ENCODE measurements at regions of chr16 and their contacts with region 1.

Region 1: DNA sequence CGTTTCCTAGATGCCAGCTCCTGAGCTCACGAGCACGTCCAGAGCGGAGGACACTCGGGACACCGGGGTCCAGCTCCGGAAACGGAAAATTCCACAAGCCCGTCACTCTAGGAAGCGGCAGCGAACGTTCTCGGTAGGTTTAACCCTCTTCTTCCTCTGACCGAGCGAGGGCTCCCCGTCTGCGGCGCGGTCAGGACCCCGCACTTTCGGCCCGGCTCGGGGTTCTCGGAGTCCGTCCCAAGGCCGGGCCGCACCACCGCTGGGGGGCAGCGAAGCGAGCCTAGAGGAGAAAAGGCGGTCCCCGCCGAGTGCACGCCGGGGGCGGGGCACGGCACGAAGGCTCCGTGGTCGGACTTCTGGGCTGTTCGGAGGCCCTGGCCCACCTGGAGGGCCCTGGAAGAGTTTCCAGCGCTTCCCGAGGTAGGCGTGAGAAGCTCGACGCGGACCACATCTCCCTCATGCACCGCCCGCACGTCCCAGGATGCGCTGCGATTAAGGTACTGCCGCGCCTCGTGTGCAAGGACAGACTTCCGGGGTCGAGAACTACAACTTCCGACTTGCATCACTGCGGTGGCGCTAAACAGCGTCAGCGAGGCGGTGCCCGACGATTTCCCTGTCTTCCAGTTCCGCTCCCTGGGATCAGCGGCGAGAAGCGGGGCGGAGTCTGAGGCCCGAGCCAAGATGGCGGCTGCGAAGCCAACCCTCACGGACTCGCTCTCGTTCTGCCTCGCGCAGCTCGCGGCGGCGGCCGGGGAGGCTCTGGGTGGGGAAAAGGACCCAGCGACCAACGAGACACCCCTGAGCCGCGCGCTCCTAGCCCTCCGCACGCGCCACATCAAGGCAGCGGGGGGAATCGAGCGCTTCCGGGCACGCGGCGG is at the start of gene ARMC5:
- DNase-seq: peak; percentile 95 to 99 (median 98)
- H3K4me3 ChIP-seq: peak within 1 kb of the TSS; percentile 66 to 100 (median 88)
- H3K27ac ChIP-seq: peak within 1 kb of the TSS; percentile 96 to 100 (median 100)
- H3K27me3 ChIP-seq: no peaks in the 10 kb centered on the region
- CTCF ChIP-seq: peak in 55 of 56 donors; percentile 32 to 84 (median 66)
- total RNA-seq, gene ARMC5: 10.4 to 21.8 (median 15.2) TPM

Region 2: GRCh38 chr16:30957456-30958174 is 501.5 kb before region 1 on chr16 and contains the start of gene SETD1A:
- intact Hi-C with region 1: loop called (anchors 5 to 10 kb)
- DNase-seq: peak; percentile 93 to 99 (median 96)
- H3K4me3 ChIP-seq: peak within 1 kb of the TSS; percentile 58 to 96 (median 84)
- H3K27ac ChIP-seq: peak within 1 kb of the TSS; percentile 77 to 99 (median 98)
- H3K27me3 ChIP-seq: no peaks in the 10 kb centered on the region
- CTCF ChIP-seq: peak in 18 of 56 donors; percentile 1 to 49 (median 12)
- total RNA-seq, gene SETD1A: 13.3 to 28.5 (median 17.9) TPM

Region 3: DNA sequence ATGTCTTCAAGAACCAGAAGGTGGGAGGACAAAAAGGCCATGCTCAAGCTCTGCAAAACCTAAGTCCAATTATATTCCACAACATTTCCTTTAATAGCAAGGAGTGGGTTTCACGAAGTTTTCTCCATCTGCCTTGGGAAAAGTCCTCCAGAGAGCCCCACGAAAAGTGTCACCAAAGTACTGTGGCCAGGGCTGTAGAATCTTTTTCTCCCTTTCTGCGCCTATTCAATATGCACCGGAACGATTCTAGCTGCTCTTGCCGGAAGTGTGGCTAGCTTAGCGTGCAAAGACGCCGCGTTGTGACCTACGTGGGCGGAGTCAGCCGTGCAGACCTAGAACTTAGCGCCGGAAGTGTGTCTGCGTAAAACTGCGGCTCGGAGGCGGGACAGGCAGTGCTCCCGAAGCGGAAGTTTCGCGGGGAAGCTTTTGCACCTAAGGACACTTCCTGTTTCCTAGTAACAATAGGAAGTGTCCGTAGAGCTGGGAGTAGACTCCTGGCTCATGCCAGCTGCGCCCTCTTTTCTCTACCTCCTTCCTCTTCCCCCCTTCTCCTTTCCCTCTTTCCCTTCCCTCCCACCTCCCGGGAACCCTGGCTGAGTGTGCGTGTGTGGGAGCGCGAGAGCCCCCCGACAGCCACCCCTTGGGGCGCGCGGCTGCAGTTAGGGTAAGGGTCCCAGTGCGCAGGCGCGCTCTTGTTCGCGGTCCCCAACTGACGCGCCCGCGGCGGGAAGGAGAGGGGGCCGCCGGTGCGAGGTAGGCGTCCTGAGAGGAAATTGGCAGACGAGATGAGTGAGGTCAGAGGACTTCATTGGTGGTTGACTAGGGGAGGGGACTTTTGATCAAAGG is 384.9 kb before region 1 on chr16 and contains the starts of genes ZNF646 and ZNF668:
- intact Hi-C with region 1: loop called in 1 of 2 experiments (anchors 10 kb)
- DNase-seq: peak; percentile 98 to 100 (median 99)
- H3K4me3 ChIP-seq: peak within 1 kb of the TSS; percentile 74 to 99 (median 95)
- H3K27ac ChIP-seq: peak within 1 kb of the TSS; percentile 78 to 98 (median 95)
- H3K27me3 ChIP-seq: no peaks in the 10 kb centered on the region
- CTCF ChIP-seq: peak in 27 of 56 donors; percentile 5 to 44 (median 20)
- total RNA-seq, gene ZNF646: 11.2 to 24.3 (median 16.7) TPM
- total RNA-seq, gene ZNF668: 7.9 to 24.5 (median 12.5) TPM

Region 4: GRCh38 chr16:31179747-31180459 is 279.2 kb before region 1 on chr16 and contains the start of gene FUS:
- intact Hi-C with region 1: loop called in 1 of 2 experiments (anchors 10 kb)
- DNase-seq: peak; percentile 86 to 92 (median 92)
- H3K4me3 ChIP-seq: peak within 1 kb of the TSS; percentile 67 to 100 (median 89)
- H3K27ac ChIP-seq: peak within 1 kb of the TSS; percentile 78 to 100 (median 98)
- H3K27me3 ChIP-seq: no peaks in the 10 kb centered on the region
- CTCF ChIP-seq: peak in 10 of 56 donors; percentile 8 to 25 (median 15)
- total RNA-seq, gene FUS: 158 to 315 (median 238) TPM

Region 5: DNA sequence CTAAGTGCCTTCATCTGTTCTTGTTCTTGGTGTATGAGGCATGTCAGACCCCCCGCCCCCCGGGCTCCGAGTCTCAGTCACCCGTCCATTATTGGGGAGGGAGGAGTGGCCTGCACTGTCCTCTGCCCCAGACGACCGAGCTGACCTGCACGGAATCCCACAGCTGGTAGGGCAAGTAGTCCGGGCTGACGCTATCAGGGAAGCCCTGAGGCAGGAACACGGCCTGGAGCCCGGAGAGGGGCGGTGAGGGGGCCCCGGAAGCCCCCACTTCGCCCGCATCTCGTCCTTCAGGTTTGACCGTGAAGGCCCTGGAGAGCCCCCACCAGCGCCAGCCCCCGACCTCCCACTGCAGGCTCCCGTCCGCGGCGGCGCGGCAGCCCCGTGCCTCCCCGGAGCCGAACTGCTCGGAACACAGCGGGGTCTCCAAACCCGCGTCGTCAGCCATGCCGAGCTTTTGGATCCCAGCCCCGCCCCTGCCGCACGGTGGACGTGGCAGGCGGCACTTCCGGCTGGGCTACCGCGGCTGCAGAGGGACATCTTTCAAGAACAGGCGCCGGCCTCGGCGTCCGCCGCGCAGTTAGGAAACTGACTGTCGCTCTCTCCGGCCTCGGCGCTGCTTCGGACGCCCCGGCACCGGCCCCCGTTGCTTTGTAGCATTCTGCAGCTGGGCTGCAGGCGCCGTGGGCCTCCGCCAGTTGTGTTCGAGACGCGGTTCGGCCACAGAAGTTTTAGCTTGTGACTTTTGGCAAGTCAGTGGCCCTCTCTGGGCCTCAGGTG is 49.0 kb after region 1 on chr16 and contains the start of gene RUSF1:
- intact Hi-C with region 1: loop called (anchors 1 to 5 kb)
- DNase-seq: peak; percentile 88 to 94 (median 92)
- H3K4me3 ChIP-seq: peak within 1 kb of the TSS; percentile 52 to 100 (median 97)
- H3K27ac ChIP-seq: peak within 1 kb of the TSS; percentile 56 to 98 (median 93)
- H3K27me3 ChIP-seq: no peaks in the 10 kb centered on the region
- CTCF ChIP-seq: peak in 36 of 56 donors; percentile 4 to 57 (median 26)
- total RNA-seq, gene RUSF1: 29.1 to 91.6 (median 63.9) TPM

Region 6: DNA sequence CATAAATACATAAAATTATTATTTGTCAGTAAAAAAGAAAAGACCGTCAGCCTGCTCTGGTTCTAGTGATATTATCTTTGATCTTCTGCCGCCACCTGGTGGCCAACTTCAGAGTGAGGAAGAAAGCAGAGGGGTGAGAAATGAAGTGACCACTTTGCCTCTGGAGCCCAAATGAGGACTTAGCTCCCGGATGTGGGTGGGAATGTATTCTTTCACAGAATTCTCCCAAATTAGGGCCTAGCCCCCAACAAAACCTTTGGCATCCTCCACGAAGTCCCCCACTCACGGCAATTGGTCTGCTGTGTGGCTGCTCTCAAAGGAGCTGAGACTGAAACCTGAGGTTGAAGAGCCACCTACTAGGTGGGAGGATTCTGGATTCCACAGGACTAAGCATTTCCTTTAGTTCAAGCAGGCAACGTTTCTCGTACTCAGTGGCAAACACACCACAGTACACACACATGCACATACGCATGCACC is 409.6 kb after region 1 on chr16:
- intact Hi-C with region 1: loop called (anchors 2 to 5 kb)
- DNase-seq: peak; percentile 60 to 89 (median 79)
- H3K4me3 ChIP-seq: peak overlapping the region in 27 of 59 donors; percentile 1 to 35 (median 18)
- H3K27ac ChIP-seq: peak overlapping the region in 18 of 59 donors; percentile 1 to 71 (median 46)
- H3K27me3 ChIP-seq: no peaks in the 10 kb centered on the region
- CTCF ChIP-seq: peak; percentile 79 to 97 (median 91)

Measured in dorsolateral prefrontal cortex (tissue), 120 donors.